ACHN (cell line): ENCODE measurements at regions of chr3 and their contacts with region 1.

Region 1: GRCh38 chr3:4722103-4722502 is 229.0 kb downstream of the ITPR1 start:
- DNase-seq: peak; percentile 74

Region 2: GRCh38 chr3:4174773-4175172 is 547.3 kb before region 1 on chr3:
- in situ Hi-C with region 1: no loop called
- DNase-seq: no peak

Region 3: DNA sequence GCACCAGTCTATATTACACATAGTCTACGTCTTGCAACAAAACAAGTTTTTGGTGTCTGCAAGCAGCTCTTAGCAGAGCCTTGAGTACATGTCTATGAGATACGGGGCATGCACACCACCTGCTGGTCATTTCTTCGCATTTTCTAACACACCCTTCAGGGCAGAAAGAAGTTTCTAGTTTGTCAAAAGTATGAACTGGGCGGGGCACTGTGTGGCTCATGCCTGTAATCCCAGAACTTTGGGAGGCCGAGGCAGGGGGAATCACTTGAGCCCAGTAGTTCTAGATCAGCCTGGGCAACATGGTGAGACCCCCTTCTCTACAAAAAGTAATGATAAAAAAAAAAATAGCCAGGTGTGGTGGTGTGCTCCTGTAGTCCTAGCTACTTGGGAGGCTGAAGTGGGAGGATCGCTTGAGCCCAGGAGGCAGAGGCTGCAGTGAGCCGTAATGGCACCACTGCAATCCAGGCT is 335.8 kb after region 1 on chr3:
- in situ Hi-C with region 1: loop called (anchors 25 kb)
- DNase-seq: peak; percentile 75